Caki2 (cell line): ENCODE measurements at regions of chr17 and their contacts with region 1.

Region 1: DNA sequence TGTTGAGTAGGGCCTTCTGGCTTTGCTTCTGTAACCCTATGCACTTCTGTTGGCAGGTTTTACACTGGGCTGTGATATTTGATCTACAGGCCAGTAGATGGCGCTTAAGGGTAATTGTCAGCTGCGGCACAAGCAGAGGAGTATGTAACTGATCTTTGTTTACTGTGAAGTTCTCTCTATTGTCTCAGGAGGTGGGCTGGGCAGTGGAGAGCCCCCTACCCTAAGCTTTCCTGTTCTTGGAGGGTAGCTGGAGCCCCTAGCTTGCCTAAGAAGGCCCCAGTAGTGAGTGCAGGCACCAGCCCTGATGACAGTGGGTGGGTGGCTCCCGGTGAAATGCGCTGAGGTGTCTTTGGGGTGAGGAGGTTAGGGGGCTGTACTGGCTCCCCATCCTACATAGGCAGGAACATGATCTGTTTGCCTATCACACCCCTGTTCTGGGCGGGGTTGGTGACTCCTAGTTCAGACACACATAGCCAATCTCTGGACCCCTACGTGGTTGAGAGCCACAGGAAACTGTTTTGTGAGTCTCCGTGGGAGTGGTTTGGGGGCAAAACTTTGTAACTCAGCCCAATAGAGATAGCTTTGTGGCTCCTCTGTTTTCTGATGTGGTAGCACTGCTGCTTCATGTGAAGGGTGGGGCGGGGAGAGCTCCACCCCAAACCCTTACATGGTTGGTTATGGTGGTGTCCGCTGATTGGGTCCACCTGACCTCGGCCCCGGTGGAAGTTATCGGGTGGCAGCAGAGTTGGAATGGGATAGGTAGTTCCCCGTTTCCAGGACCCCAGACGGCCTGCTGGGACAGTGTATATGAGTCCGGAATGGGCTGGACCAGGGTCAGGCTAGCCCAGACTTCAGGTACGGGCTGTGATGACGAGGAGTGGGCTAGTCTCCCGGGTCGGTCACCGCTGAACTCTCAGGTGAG is 60.4 kb downstream of the SLFN11 start:
- DNase-seq: peak; percentile 41

Region 2: DNA sequence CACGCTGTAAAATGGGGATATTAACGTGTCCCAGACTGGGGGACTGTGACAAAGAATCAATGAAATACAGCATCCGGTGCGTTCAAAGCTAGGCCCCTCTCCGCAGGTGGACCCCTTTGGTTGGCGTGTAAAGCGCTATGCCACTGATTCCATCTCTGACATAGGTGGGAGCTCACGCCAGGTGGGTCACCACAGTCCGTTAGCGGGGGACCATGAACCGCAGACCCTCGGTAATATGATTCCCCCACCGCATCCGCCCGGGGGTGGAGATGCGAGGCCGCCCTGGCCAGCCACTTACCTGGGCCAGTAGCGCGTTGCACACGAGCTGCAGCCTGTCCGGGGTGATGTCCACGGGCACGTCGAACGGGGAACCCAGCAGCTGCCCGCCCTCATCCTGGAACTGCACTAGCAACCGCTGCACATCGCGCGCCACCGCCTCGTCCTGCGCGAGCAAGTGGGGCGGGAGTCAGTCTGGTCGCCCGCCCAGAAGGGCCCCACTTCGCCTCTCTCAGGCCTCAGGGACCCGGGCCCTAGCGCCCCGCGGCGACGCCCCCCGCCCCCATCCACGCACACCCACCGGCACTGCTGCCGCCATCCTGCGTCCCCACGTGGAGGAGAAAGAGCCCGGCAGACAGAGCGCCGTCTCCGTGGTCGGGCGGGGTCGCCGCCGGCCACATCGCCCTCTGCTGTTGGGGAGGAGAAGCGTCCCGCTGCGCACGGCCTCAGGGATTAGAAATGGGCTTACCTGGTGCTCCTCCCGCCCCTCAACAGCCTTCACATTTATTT is 171.2 kb before region 1 on chr17 and contains the start of gene NLE1:
- in situ Hi-C with region 1: no loop called
- DNase-seq: peak; percentile 73
- total RNA-seq, gene NLE1: 39.3 and 53.6 TPM in 2 replicates

Region 3: GRCh38 chr17:35390663-35391062 is 77.6 kb after region 1 on chr17:
- in situ Hi-C with region 1: no loop called
- DNase-seq: no peak

Region 4: DNA sequence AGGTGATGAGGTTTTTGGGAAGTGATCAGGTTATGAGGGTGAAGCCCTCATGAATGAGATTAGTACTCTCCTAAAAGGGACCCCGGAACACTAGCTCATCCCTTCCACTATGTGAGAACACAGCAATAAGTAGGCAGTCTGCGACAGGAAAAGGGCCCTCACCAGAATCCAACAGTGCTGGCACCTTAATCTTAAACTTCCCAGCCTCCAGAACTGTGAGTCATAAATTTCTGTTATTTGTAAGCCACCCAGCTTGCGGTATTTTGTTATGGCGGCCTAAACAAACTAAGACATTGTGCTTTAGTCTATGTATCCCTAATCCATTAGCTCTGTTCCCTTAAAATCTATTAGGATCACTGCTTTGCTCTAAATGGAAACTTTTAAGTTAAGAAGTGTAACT is 110.7 kb after region 1 on chr17:
- in situ Hi-C with region 1: no loop called
- DNase-seq: no peak

Region 5: GRCh38 chr17:35540589-35541404 is 227.7 kb after region 1 on chr17:
- in situ Hi-C with region 1: loop called (anchors 25 kb)
- DNase-seq: no peak